ENCODE measurements at regions of chr5 and their contacts with region 1.

Region 1: GRCh38 chr5:40688127-40688761 is 8.5 kb downstream of the PTGER4 start:
- DNase-seq: peak; percentile 97
- ATAC-seq: peak; percentile 63
- H3K4me3 ChIP-seq: peak overlapping the region; percentile 11
- H3K27ac ChIP-seq: peak overlapping the region; percentile 41
- H3K4me1 ChIP-seq: peaks cover 56% of the 10 kb centered on the region
- H3K27me3 ChIP-seq: no peaks in the 10 kb centered on the region
- CTCF ChIP-seq: peak; percentile 96

Region 2: GRCh38 chr5:39648532-39649213 is 1039.6 kb before region 1 on chr5:
- CTCF ChIA-PET with region 1: no interaction called
- POLR2A ChIA-PET with region 1: no interaction called
- intact Hi-C with region 1: loop called (anchors 1 kb)
- DNase-seq: peak; percentile 93
- ATAC-seq: peak; percentile 97
- H3K4me3 ChIP-seq: no peak overlapping the region
- H3K27ac ChIP-seq: peak overlapping the region; percentile 62
- H3K4me1 ChIP-seq: peaks cover 30% of the 10 kb centered on the region
- H3K27me3 ChIP-seq: no peaks in the 10 kb centered on the region
- CTCF ChIP-seq: peak; percentile 83

Region 3: DNA sequence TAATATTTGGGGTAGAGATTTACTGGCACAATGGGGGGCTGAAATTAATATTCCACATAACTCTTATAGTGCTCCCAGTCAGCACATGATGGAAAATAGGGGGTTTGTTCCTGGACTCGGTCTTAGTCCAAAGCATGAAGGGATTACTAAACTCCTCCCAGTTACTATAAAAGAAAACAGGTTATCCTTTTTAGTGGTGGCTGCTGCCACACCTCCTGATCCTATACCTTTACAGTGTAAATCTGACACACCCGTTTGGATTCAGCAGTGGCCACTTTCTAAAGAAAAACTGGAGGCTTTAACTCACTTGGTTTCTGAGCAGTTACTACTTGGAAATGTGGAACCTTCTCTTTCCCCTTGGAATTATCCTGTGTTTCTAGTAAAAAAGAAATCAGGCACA is 581.4 kb before region 1 on chr5:
- CTCF ChIA-PET with region 1: no interaction called
- POLR2A ChIA-PET with region 1: no interaction called
- intact Hi-C with region 1: loop called (anchors 10 kb)
- DNase-seq: peak; percentile 27
- ATAC-seq: no peak
- H3K4me3 ChIP-seq: no peak overlapping the region
- H3K27ac ChIP-seq: no peak overlapping the region
- H3K4me1 ChIP-seq: peaks cover 35% of the 10 kb centered on the region
- H3K27me3 ChIP-seq: no peaks in the 10 kb centered on the region
- CTCF ChIP-seq: no peak

Region 4: DNA sequence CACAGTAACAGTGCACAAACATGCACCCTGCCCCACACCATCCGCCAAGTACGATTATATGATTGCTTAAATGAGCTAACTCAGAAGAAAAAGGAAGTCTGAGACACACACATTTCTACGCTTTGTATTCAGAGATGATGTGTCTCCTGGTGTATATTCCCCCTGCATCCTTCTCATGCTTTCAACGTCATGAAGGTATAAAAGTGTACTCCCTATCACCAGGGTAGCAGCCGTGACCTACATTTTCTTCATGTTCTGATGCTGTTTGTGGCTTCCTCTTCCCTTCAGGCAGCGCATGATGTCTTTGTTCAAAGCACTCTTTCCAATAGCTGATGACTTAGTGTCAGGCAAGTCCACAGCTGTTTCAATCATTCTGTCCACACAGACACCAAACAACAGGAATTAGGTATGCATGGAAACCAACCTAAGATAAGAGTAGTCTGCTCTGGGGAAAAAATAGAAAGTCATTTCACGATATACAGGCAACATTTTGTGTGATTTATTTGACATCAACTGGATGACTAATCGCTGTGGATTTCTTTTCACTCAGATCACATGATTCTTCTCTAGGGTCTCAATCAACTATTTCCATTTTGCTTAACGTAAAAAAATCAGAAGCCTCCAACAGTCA is 277.9 kb before region 1 on chr5:
- CTCF ChIA-PET with region 1: no interaction called
- POLR2A ChIA-PET with region 1: no interaction called
- intact Hi-C with region 1: loop called (anchors 10 kb)
- DNase-seq: peak; percentile 71
- ATAC-seq: peak; percentile 6; the same call in 1 of the 2 replicates
- H3K4me3 ChIP-seq: peak overlapping the region; percentile 23
- H3K27ac ChIP-seq: peak overlapping the region; percentile 90
- H3K4me1 ChIP-seq: peaks cover 34% of the 10 kb centered on the region
- H3K27me3 ChIP-seq: no peaks in the 10 kb centered on the region
- CTCF ChIP-seq: no peak

Region 5: DNA sequence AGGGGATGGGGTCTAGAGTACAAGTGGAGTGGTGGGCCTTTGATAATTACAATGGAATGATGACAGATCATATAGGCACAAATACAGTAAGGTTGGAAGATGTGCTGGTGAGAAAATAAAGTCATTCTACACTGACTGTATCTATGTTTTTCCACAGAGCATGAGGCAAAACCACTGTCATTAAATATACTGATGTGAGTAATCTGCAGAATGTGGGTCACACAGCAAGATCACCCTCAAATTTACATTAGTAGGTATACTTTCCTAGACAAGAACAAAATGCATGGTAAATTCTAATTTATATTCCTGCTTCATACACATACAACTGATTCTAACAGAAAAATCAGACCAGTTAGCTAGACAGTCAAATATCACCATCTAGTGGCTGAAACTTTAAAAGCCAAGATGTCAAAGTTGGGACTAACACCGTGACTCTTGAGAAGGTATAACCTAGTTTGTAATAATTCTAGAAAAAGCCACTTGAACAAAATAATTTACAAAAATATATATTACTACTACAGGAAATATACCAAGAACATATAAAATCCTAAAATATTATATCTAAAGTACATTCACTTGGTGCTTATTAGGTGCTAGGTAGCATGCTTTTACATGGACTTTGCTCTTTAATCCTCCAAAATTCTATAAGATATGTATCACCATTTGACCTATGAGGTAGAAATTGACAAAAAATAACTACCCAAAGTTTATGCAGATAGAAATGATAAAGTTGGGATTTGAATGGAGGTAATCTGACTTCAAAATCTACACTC is 48.0 kb after region 1 on chr5:
- CTCF ChIA-PET with region 1: interaction called, 3 read pairs
- POLR2A ChIA-PET with region 1: no interaction called
- intact Hi-C with region 1: loop called (anchors 1 kb)
- DNase-seq: peak; percentile 95
- ATAC-seq: peak; percentile 61
- H3K4me3 ChIP-seq: no peak overlapping the region
- H3K27ac ChIP-seq: no peak overlapping the region
- H3K4me1 ChIP-seq: peaks cover 16% of the 10 kb centered on the region
- H3K27me3 ChIP-seq: no peaks in the 10 kb centered on the region
- CTCF ChIP-seq: peak; percentile 94

Measured in PC-3 (cell line).